ENCODE measurements at regions of chr19 and their contacts with region 1.

Region 1: DNA sequence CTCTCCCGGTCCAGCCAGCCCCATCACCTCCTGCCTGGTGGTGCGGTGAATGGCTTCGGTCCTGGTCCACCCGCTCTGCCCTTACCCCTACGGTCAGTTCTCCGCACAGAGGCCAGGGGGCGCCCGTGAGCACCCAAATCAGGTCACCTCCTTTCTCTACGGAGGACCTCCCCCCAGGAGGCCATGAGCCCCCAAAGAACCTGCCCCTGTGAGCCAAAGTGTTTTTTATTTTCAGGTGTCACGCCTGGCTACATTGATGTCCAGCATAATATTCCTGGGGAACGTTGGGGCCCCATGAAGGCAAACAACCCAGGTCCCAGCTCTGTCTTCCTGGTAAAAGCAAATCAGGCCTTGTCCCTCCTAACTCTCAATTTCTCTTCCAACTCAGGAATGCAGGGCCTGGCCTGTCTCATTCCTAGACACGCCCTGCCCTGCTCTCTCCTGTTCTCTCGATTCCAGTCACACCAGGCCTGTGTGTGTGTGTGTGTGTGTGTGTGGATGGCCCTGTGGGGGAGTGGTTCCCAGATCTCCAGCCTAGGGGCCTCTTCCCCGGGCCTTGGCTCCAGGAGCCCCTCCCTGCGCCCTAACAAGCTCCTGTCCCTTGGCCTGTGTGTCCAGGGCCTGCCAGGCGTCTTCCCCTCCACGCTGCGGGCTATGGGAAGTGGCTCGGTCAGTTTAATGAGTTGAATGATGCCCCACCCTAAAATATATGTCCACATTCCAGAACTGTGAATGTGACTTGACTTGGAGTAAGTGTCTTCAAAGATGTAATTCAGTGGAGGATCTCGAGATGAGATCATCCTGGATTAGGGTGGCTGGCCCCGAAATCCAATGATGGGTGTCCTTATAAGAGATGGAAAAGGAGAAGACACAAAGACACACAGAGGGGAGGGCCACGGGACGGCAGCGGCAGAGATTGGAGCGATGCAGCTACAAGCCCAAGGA is 9.8 kb upstream of the GIPC1 start:
- H3K4me3 Mint-ChIP-seq: no peak overlapping the region
- H3K27ac Mint-ChIP-seq: no peak overlapping the region
- H3K4me1 Mint-ChIP-seq: peaks cover 41% of the 10 kb centered on the region
- H3K27me3 Mint-ChIP-seq: peaks cover 7% of the 10 kb centered on the region

Region 2: GRCh38 chr19:14556662-14557188 is 51.0 kb after region 1 on chr19:
- intact Hi-C with region 1: loop called (anchors 1 kb)
- H3K4me3 Mint-ChIP-seq: peak overlapping the region; percentile 27
- H3K27ac Mint-ChIP-seq: no peak overlapping the region
- H3K4me1 Mint-ChIP-seq: peaks cover 52% of the 10 kb centered on the region
- H3K27me3 Mint-ChIP-seq: no peaks in the 10 kb centered on the region

Measured in dendritic cell treated with granulocyte-macrophage colony-stimulating factor and Interleukin-4, amounts not matched to agents 40 ng/mL and 50 ng/mL, for 4 days (primary cell).